Adrenal gland (tissue), 19 donors: ENCODE measurements at regions of chr7 and their contacts with region 1.

Region 1: GRCh38 chr7:94666879-94667587 is 11.1 kb upstream of the SGCE start:
- DNase-seq: no peak
- H3K4me3 ChIP-seq: no peak overlapping the region
- H3K27ac ChIP-seq: no peak overlapping the region
- H3K4me1 ChIP-seq: no peaks in the 10 kb centered on the region
- H3K27me3 ChIP-seq: no peaks in the 10 kb centered on the region
- CTCF ChIP-seq: no peak
- POLR2A ChIP-seq: no peak

Region 2: DNA sequence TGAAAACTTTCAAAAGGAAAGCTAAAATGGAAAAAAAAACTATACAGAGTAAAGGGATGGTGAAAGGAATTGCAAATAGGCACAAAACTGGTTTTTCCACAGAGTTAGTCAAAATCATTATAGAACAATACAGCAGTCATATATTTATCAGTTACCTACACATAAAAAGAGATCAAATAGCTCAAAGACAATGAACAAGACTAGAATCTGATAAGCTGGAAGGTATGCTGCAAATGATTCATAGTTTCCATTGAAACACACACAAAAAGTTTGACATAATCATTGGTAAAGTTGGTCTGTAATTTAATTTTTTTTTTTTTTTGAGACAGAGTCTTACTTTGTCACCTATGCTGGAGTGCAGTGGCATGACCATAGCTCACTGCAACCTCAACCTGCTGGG is 81.3 kb after region 1 on chr7:
- intact Hi-C with region 1: no loop called
- DNase-seq: no peak
- H3K4me3 ChIP-seq: no peak overlapping the region
- H3K27ac ChIP-seq: no peak overlapping the region
- H3K4me1 ChIP-seq: no peaks in the 10 kb centered on the region
- H3K27me3 ChIP-seq: no peaks in the 10 kb centered on the region
- CTCF ChIP-seq: no peak
- POLR2A ChIP-seq: no peak

Region 3: GRCh38 chr7:94907026-94907810 is 240.2 kb after region 1 on chr7 and contains the start of gene PPP1R9A:
- intact Hi-C with region 1: loop called in 1 of 2 experiments (anchors 10 kb)
- DNase-seq: peak; percentile 60 to 78 (median 66)
- H3K4me3 ChIP-seq: peak within 1 kb of the TSS; percentile 0 to 77 (median 40)
- H3K27ac ChIP-seq: peak within 1 kb of the TSS; percentile 36 to 95 (median 86)
- H3K4me1 ChIP-seq: peaks cover 5 to 25% of the 10 kb centered on the region in 2 donors
- H3K27me3 ChIP-seq: no peaks in the 10 kb centered on the region
- CTCF ChIP-seq: peak; percentile 10 to 38 (median 29)
- POLR2A ChIP-seq: peak in 1 of 2 donors; percentile 35
- total RNA-seq, gene PPP1R9A: 31.2 to 86.0 (median 50.6) TPM